ENCODE measurements at regions of chr2 and their contacts with region 1.

Region 1: DNA sequence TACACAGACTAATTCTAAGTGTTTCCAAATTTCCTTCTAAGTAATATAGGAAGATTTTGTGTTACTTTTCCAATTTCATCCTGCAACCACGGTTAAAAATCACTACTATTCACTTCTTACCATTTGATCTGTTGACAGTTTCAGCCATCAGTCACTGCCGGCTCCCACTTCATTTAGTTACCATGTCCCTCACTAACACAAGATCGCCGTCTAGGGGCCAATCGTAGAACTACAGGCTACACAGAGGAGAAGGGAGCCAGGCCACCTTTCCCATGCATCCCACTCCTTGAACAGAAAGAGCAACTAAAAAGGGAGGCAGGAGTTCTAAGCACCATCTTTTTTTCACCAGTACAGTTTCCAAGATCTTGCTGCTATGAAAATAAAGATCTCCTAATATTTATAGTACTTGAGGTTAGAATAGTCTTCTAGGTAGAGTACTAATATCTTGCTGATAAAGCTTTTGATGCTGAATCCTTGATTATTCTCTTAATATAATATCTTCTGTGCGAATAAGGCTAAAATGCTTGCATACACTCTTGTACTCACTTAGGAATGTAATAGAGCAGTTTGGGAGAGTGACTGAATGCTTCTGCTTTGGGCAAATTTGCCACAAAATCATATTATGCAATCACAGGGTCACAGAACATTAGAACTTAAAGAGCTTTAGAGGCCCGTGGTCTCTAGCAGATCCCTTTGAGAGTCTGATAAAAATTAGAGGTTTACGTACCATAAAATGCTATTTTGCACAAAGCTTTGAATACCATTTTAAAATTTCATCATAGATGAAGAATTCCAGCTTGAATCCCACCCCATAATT is 39.5 kb upstream of the CYP1B1 start:
- DNase-seq: peak; percentile 81 to 83 (median 82)
- ATAC-seq: peak; percentile 16 to 88 (median 83)
- H3K4me3 ChIP-seq: no peak overlapping the region
- H3K27ac ChIP-seq: peak overlapping the region in 8 of 12 donors; percentile 10 to 66 (median 56)
- H3K4me1 ChIP-seq: peaks cover 0 to 51% (median 32%) of the 10 kb centered on the region in 12 donors
- H3K27me3 ChIP-seq: no peaks in the 10 kb centered on the region
- CTCF ChIP-seq: peak; percentile 86 to 97 (median 92)
- POLR2A ChIP-seq: no peak

Region 2: DNA sequence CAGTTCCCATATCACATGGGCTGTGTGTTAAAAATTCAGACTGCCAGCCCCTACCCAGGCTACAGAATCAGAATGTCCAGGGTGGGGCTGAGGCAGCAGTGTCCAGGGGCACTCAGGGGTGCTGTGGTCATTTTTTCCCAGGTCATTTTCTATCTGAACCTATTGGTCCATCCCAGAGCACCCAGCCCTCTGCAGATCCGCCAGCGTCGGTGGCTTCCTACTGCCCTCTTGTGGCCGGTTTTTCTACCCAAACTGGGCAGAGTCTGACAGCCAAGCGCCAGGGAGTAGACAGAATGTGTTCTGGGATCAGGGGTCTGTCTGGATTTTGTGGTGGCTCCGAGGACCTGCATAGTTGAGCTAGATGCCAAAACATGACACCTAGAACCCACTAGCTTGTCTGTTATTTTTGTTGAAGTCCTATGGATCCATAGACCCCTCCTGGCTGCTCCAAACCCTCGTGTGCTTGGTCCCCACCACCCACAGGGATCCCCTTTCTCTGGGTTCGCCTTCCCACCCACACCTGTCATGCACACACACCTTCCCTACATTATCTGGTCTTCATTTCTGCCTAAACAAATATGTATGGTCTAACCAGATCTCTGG is 224.4 kb before region 1 on chr2:
- intact Hi-C with region 1: loop called in 1 of 10 experiments (anchors 10 kb)
- DNase-seq: peak; percentile 58 to 80 (median 70)
- ATAC-seq: peak; percentile 82 to 94 (median 90)
- H3K4me3 ChIP-seq: no peak overlapping the region
- H3K27ac ChIP-seq: no peak overlapping the region
- H3K4me1 ChIP-seq: peaks cover 0 to 50% (median 3%) of the 10 kb centered on the region in 12 donors
- H3K27me3 ChIP-seq: peaks cover 0 to 9% (median 0%) of the 10 kb centered on the region in 9 donors
- CTCF ChIP-seq: peak; percentile 67 to 85 (median 75)
- POLR2A ChIP-seq: no peak

Region 3: GRCh38 chr2:38076606-38077430 is 38.6 kb before region 1 on chr2:
- intact Hi-C with region 1: loop called in 9 of 10 experiments (anchors 1 to 5 kb)
- DNase-seq: peak; percentile 81 to 89 (median 83)
- ATAC-seq: peak; percentile 33 to 79 (median 72)
- H3K4me3 ChIP-seq: peak overlapping the region; percentile 30 to 77 (median 65)
- H3K27ac ChIP-seq: peak overlapping the region; percentile 78 to 97 (median 93)
- H3K4me1 ChIP-seq: peaks cover 0 to 52% (median 22%) of the 10 kb centered on the region in 12 donors
- H3K27me3 ChIP-seq: peaks cover 0 to 55% (median 32%) of the 10 kb centered on the region in 9 donors
- CTCF ChIP-seq: peak; percentile 17 to 60 (median 34)
- POLR2A ChIP-seq: peak in 1 of 2 donors; percentile 69

Region 4: GRCh38 chr2:38264396-38265281 is 149.2 kb after region 1 on chr2:
- intact Hi-C with region 1: loop called in 2 of 10 experiments (anchors 5 to 10 kb)
- DNase-seq: no peak
- ATAC-seq: no peak
- H3K4me3 ChIP-seq: no peak overlapping the region
- H3K27ac ChIP-seq: peak overlapping the region in 6 of 12 donors; percentile 47 to 84 (median 56)
- H3K4me1 ChIP-seq: peaks cover 0 to 32% (median 0%) of the 10 kb centered on the region in 12 donors
- H3K27me3 ChIP-seq: no peaks in the 10 kb centered on the region
- CTCF ChIP-seq: no peak
- POLR2A ChIP-seq: no peak

Measured in heart left ventricle (tissue), 16 donors.